H1 (cell line): ENCODE measurements at regions of chr22 and their contacts with region 1.

Region 1: DNA sequence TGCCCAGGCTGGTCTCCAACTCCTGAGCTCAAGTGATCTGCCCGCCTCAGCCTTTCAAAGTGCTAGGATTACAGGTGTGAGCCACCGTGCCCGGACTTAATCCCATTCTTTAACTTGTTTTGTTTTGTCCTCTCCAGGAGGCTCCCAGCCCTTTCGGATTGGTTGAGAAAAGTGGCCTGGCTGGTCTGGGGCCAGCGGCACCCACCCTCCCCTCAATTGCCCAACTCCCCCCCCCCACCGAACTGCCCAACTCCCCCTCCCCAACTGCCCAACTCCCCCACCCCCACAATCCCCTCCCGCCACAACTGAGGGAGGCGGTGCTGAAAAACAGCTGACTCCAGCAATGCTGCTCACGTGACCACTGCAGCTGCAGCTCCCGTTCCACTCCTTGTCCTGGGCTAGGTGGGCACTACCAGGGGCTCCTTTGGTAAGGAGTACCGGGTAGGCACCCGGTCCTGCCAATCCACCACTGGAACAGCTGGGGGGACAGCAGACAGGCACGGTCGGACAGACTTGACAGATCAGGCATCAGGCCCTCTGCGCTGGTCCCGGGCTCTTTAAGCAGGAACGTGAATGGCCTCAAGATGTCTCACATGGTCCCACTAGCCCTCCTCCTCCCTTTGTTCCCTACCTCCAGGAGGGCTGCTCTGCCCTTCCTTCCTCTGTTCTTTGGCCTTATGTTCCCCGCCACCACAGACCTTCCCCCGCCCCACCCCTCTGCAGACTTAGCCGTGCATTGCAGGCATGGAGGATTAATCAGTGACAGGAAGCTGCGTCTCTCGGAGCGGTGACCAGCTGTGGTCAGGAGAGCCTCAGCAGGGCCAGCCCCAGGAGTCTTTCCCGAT is at the start of gene TCN2:
- DNase-seq: peak; percentile 61 to 91
- H3K4me3 ChIP-seq: peak within 1 kb of the TSS; percentile 48 to 83 (median 76)
- H3K27ac ChIP-seq: peak within 1 kb of the TSS; percentile 89
- H3K4me1 ChIP-seq: peaks cover 3 to 31% (median 12%) of the 10 kb centered on the region in 4 experiments
- H3K27me3 ChIP-seq: no peaks in the 10 kb centered on the region
- CTCF ChIP-seq: no peak
- EP300 ChIP-seq: peak in 1 of 2 experiments; percentile 0; a peak in 1 of 3 replicates
- POLR2A ChIP-seq: peak; percentile 74 to 81
- RAD21 ChIP-seq: no peak
- total RNA-seq, gene TCN2: 30.0 and 36.2 TPM in 2 replicates

Region 2: GRCh38 chr22:30556388-30556787 is 50.3 kb before region 1 on chr22:
- CTCF ChIA-PET with region 1: interaction called, 10 read pairs
- POLR2A ChIA-PET with region 1: interaction called, 3 read pairs
- DNase-seq: no peak
- H3K4me3 ChIP-seq: no peak overlapping the region
- H3K27ac ChIP-seq: no peak overlapping the region
- H3K4me1 ChIP-seq: peaks cover 0 to 11% (median 4%) of the 10 kb centered on the region in 4 experiments; a peak in 5 of 7 replicates
- H3K27me3 ChIP-seq: no peaks in the 10 kb centered on the region
- CTCF ChIP-seq: peak; percentile 34 to 47 (median 37)
- EP300 ChIP-seq: no peak
- POLR2A ChIP-seq: no peak
- RAD21 ChIP-seq: peak; percentile 50 to 63

Region 3: GRCh38 chr22:30574997-30575671 is 31.5 kb before region 1 on chr22:
- CTCF ChIA-PET with region 1: interaction called, 12 read pairs
- POLR2A ChIA-PET with region 1: interaction called, 4 read pairs
- DNase-seq: no peak
- H3K4me3 ChIP-seq: peak overlapping the region; percentile 40 to 70 (median 43); a peak in 7 of 8 replicates
- H3K27ac ChIP-seq: no peak overlapping the region
- H3K4me1 ChIP-seq: peaks cover 0 to 15% (median 5%) of the 10 kb centered on the region in 4 experiments; a peak in 5 of 7 replicates
- H3K27me3 ChIP-seq: no peaks in the 10 kb centered on the region
- CTCF ChIP-seq: peak in 1 of 3 experiments; percentile 39; a peak in 1 of 4 replicates
- EP300 ChIP-seq: no peak
- POLR2A ChIP-seq: 0 out of 3 replicates have a peak, but pooled peaks of 1 of the 2 experiments have one; percentile 2
- RAD21 ChIP-seq: no peak

Region 4: DNA sequence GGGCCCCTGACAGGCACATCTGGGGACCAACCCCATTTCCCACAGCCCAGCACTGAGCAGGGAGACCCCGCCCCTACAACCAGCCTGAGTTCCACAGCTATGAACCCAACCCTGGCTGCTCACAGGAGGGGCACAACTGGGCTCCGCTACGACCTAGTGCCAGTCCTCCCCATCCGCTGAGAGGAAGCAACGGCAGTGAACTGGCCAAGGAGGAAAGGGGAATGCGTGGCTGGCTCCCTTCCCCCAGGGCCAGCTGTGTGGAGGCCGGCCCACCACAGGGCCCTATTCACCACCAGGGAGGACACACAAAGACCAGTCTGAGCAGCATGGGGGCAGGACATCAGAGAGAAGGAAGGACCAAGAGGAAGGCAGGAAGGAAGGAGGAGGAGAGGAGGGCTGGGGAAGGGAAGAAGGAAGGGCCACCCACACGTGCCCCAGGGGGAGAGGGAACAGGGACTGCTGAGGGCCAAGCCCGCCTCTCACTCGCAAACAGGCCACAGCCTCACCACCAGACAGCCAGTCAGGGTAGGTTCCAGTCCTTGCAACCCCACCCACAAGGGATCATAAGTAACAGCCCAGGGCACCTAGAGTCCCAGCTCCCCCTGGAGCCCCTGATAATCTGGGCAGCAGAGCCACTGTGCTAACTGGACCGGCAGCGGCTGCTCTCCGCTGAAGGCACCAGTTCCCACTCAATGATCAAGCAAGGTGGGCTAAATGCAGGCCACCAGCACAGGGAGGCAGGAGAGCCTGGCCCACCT is 23.7 kb before region 1 on chr22:
- CTCF ChIA-PET with region 1: interaction called, 40 read pairs
- POLR2A ChIA-PET with region 1: no interaction called
- DNase-seq: no peak
- H3K4me3 ChIP-seq: no peak overlapping the region
- H3K27ac ChIP-seq: no peak overlapping the region
- H3K4me1 ChIP-seq: no peaks in the 10 kb centered on the region; a peak in 1 of 7 replicates
- H3K27me3 ChIP-seq: no peaks in the 10 kb centered on the region
- CTCF ChIP-seq: no peak
- EP300 ChIP-seq: no peak
- POLR2A ChIP-seq: no peak
- RAD21 ChIP-seq: no peak

Region 5: GRCh38 chr22:30591588-30592359 is 14.9 kb before region 1 on chr22 and contains the start of gene PES1:
- CTCF ChIA-PET with region 1: interaction called, 52 read pairs
- POLR2A ChIA-PET with region 1: interaction called, 16 read pairs
- DNase-seq: peak; percentile 92 to 95
- H3K4me3 ChIP-seq: peak within 1 kb of the TSS; percentile 68 to 100 (median 94)
- H3K27ac ChIP-seq: peak within 1 kb of the TSS; percentile 94
- H3K4me1 ChIP-seq: peaks cover 0 to 8% (median 1%) of the 10 kb centered on the region in 4 experiments; a peak in 2 of 7 replicates
- H3K27me3 ChIP-seq: no peaks in the 10 kb centered on the region; a peak in 2 of 7 replicates
- CTCF ChIP-seq: no peak
- EP300 ChIP-seq: no peak
- POLR2A ChIP-seq: peak; percentile 55 to 71; a peak in 2 of 3 replicates
- RAD21 ChIP-seq: no peak
- total RNA-seq, gene PES1: 121 and 133 TPM in 2 replicates

Region 6: GRCh38 chr22:30617819-30618218 is 11.1 kb after region 1 on chr22:
- CTCF ChIA-PET with region 1: interaction called, 6 read pairs
- POLR2A ChIA-PET with region 1: interaction called, 10 read pairs
- DNase-seq: no peak
- H3K4me3 ChIP-seq: no peak overlapping the region
- H3K27ac ChIP-seq: no peak overlapping the region
- H3K4me1 ChIP-seq: no peaks in the 10 kb centered on the region
- H3K27me3 ChIP-seq: no peaks in the 10 kb centered on the region
- CTCF ChIP-seq: no peak
- EP300 ChIP-seq: no peak
- POLR2A ChIP-seq: no peak
- RAD21 ChIP-seq: no peak